PC-9 (cell line): ENCODE measurements at regions of chr3 and their contacts with region 1.

Region 1: GRCh38 chr3:143001369-143002082 is at the start of gene U2SURP:
- DNase-seq: peak; percentile 94 to 96
- H3K4me3 ChIP-seq: peak within 1 kb of the TSS; percentile 93
- H3K27ac ChIP-seq: peak within 1 kb of the TSS; percentile 96
- H3K4me1 ChIP-seq: peaks cover 42% of the 10 kb centered on the region
- H3K27me3 ChIP-seq: no peaks in the 10 kb centered on the region
- CTCF ChIP-seq: no peak
- total RNA-seq, gene U2SURP: 104 and 126 TPM in 2 replicates

Region 2: GRCh38 chr3:141311496-141312353 is 1689.8 kb before region 1 on chr3:
- CTCF ChIA-PET with region 1: interaction called, 22 read pairs
- POLR2A ChIA-PET with region 1: no interaction called
- intact Hi-C with region 1: no loop called
- DNase-seq: peak; percentile 89 to 99
- H3K4me3 ChIP-seq: peak overlapping the region; percentile 79
- H3K27ac ChIP-seq: no peak overlapping the region
- H3K4me1 ChIP-seq: peaks cover 7% of the 10 kb centered on the region
- H3K27me3 ChIP-seq: no peaks in the 10 kb centered on the region
- CTCF ChIP-seq: peak; percentile 73

Region 3: GRCh38 chr3:142481196-142481595 is 520.3 kb before region 1 on chr3:
- CTCF ChIA-PET with region 1: interaction called, 15 read pairs
- POLR2A ChIA-PET with region 1: no interaction called
- intact Hi-C with region 1: no loop called
- DNase-seq: no peak
- H3K4me3 ChIP-seq: no peak overlapping the region
- H3K27ac ChIP-seq: no peak overlapping the region
- H3K4me1 ChIP-seq: no peaks in the 10 kb centered on the region
- H3K27me3 ChIP-seq: no peaks in the 10 kb centered on the region
- CTCF ChIP-seq: no peak

Region 4: DNA sequence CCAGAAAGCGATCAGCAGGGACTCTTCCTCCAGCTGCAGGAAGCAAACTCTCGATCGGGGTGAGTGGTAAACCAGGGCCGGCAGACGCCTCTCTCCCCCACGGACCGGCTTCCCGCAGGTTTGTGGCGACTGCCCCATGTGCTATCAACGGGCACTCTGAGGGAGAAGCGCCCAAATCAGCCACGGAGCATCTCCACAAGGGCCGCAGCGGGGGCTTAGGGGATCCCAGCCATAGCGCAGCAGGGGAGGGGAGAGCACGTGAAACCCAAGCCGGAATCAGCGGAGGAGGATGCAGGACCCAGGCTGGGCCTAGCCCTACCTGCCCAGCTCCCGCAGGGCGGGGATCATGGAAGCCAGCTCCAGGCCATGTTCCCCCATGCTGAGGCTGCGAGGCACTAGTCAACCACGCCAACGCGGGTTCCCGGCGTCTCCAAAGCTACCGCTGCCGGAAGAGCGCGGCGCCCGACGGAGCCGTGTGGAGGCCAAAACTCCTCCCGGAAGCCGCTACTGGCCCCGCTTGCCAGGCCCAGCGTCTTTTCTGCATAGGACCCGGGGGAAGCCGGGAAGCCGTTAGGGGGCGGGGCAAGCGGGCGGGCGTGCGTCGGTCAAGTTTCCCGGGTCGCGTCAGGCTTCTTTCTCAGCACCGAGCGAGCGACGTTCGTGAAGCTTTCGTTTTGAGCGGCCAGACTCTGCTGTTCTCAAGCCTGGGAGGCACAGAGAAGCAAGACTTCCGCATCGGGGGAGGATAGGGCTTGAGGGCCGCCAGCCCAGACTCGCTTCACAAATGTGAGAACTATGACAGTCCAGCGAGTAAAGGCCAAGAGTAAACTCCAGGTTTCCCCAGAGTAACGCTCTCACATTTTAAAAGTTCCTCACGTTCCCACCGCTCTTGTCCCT is 423.0 kb before region 1 on chr3 and contains the start of gene ATR:
- CTCF ChIA-PET with region 1: no interaction called
- POLR2A ChIA-PET with region 1: interaction called, 9 read pairs
- intact Hi-C with region 1: loop called (anchors 2 kb)
- DNase-seq: peak; percentile 89 to 98
- H3K4me3 ChIP-seq: peak within 1 kb of the TSS; percentile 98
- H3K27ac ChIP-seq: peak within 1 kb of the TSS; percentile 81
- H3K4me1 ChIP-seq: peaks cover 28% of the 10 kb centered on the region
- H3K27me3 ChIP-seq: no peaks in the 10 kb centered on the region
- CTCF ChIP-seq: no peak
- total RNA-seq, gene ATR: 28.3 and 33.3 TPM in 2 replicates

Region 5: GRCh38 chr3:142723968-142724681 is 277.4 kb before region 1 on chr3 and contains the start of gene TRPC1:
- CTCF ChIA-PET with region 1: no interaction called
- POLR2A ChIA-PET with region 1: no interaction called
- intact Hi-C with region 1: loop called (anchors 10 kb)
- DNase-seq: peak; percentile 56 to 73
- H3K4me3 ChIP-seq: peak within 1 kb of the TSS; percentile 76
- H3K27ac ChIP-seq: no peak within 1 kb of the TSS
- H3K4me1 ChIP-seq: no peaks in the 10 kb centered on the region
- H3K27me3 ChIP-seq: no peaks in the 10 kb centered on the region
- CTCF ChIP-seq: no peak
- total RNA-seq, gene TRPC1: 3.8 and 6.9 TPM in 2 replicates

Region 6: GRCh38 chr3:142735462-142735861 is 266.1 kb before region 1 on chr3:
- CTCF ChIA-PET with region 1: no interaction called
- POLR2A ChIA-PET with region 1: no interaction called
- intact Hi-C with region 1: no loop called
- DNase-seq: no peak
- H3K4me3 ChIP-seq: no peak overlapping the region
- H3K27ac ChIP-seq: no peak overlapping the region
- H3K4me1 ChIP-seq: no peaks in the 10 kb centered on the region
- H3K27me3 ChIP-seq: no peaks in the 10 kb centered on the region
- CTCF ChIP-seq: no peak

Region 7: GRCh38 chr3:142987080-142987700 is 14.3 kb before region 1 on chr3:
- CTCF ChIA-PET with region 1: no interaction called
- POLR2A ChIA-PET with region 1: interaction called, 16 read pairs
- intact Hi-C with region 1: no loop called
- DNase-seq: peak in 1 of 2 experiments; percentile 55
- H3K4me3 ChIP-seq: no peak overlapping the region
- H3K27ac ChIP-seq: no peak overlapping the region
- H3K4me1 ChIP-seq: no peaks in the 10 kb centered on the region
- H3K27me3 ChIP-seq: no peaks in the 10 kb centered on the region
- CTCF ChIP-seq: peak; percentile 79